Mammary epithelial cell (primary cell): ENCODE measurements at regions of chr4 and their contacts with region 1.

Region 1: GRCh38 chr4:10179957-10180602 is 63.5 kb upstream of the WDR1 start:
- DNase-seq: no peak
- H3K4me3 ChIP-seq: no peak overlapping the region
- H3K27ac ChIP-seq: no peak overlapping the region
- H3K4me1 ChIP-seq: peaks cover 18% of the 10 kb centered on the region
- H3K27me3 ChIP-seq: no peaks in the 10 kb centered on the region
- CTCF ChIP-seq: no peak

Region 2: GRCh38 chr4:10072420-10073017 is 107.6 kb before region 1 on chr4:
- CTCF ChIA-PET with region 1: no interaction called
- dilution Hi-C with region 1: no loop called
- in situ Hi-C with region 1: no loop called
- intact Hi-C with region 1: no loop called
- DNase-seq: no peak
- H3K4me3 ChIP-seq: no peak overlapping the region
- H3K27ac ChIP-seq: no peak overlapping the region
- H3K4me1 ChIP-seq: no peaks in the 10 kb centered on the region
- H3K27me3 ChIP-seq: no peaks in the 10 kb centered on the region
- CTCF ChIP-seq: no peak

Region 3: DNA sequence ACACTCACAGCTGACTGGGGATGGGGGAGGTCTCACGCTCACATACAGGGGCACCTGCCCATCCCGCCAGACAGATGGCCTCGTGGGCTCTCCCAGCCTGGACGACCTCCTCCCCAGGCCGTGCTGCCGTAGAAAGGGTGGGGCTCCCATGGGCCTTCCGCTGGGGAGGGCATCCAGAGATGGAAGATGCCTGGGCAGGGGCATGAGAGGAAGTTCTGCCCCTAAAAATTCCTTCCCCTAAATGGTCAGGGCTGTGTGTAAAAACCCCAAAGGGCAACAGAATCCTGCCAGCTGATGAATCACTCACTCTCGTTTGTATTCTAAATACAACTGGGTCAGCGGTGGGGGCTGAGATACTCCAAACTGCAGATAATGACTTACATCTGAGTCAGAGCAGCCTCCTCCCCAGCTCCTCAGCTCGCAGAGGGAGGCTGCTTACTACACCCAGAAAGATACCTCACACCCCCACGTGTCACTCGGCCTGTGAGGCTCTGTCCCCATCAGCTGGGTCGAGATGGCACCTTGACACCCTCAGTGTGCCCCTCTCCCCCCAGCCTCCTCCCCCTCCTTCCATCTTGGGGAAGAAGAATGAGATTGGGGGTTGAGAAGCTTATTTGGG is 73.5 kb before region 1 on chr4:
- CTCF ChIA-PET with region 1: no interaction called
- dilution Hi-C with region 1: no loop called
- in situ Hi-C with region 1: no loop called
- intact Hi-C with region 1: no loop called
- DNase-seq: peak; percentile 98
- H3K4me3 ChIP-seq: peak overlapping the region in 2 of 3 experiments; percentile 28 to 31
- H3K27ac ChIP-seq: peak overlapping the region; percentile 71
- H3K4me1 ChIP-seq: peaks cover 79% of the 10 kb centered on the region
- H3K27me3 ChIP-seq: no peaks in the 10 kb centered on the region
- CTCF ChIP-seq: no peak

Region 4: DNA sequence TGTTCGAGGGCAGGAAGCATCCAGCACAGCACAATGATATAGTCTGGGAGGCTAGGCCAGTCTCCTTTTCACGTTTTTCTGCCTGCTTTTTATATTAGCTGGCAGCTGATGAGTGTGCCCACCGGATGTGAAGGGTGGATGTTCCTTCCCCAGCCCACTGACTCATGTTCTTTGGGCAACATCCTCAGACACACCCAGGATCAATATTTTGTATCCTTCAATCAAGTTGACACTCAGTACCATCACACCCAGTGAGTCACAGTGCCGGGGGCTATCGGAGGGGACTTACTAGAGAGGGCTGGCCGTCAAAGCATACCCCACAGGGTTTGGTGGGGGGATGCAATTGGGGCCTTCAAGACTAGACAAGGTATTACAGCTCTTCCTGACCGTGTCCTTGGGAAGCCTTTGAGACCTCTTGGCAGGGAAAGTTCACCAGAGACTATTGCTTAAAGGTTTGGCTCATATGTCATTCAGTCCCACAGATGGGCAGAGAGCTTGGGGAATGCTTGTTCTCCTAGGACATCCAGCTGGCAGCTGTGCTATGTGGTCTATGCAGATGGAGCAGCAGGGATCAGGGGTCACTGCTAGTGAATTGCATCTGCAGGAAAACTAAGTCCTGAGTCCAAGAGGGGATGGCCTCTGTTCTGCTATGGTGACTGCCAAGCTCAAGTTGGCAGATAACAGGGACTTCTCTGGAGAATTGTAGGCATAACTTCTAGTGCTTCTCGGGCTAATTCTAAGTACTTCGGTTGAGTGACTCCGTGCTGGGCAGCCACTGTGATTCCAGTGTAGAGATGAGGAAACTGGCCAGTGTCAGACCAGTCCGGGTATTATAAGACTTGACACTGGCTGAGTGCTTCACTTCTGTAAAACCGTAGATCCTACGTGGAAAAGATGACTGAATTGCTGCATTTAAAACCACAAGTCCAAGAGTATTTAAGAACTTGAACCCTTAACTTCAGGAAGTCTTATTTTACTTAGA is 50.6 kb before region 1 on chr4:
- CTCF ChIA-PET with region 1: no interaction called
- dilution Hi-C with region 1: loop called (anchors 5 kb)
- in situ Hi-C with region 1: no loop called
- intact Hi-C with region 1: no loop called
- DNase-seq: no peak
- H3K4me3 ChIP-seq: no peak overlapping the region
- H3K27ac ChIP-seq: no peak overlapping the region
- H3K4me1 ChIP-seq: peaks cover 7% of the 10 kb centered on the region
- H3K27me3 ChIP-seq: no peaks in the 10 kb centered on the region
- CTCF ChIP-seq: no peak

Region 5: DNA sequence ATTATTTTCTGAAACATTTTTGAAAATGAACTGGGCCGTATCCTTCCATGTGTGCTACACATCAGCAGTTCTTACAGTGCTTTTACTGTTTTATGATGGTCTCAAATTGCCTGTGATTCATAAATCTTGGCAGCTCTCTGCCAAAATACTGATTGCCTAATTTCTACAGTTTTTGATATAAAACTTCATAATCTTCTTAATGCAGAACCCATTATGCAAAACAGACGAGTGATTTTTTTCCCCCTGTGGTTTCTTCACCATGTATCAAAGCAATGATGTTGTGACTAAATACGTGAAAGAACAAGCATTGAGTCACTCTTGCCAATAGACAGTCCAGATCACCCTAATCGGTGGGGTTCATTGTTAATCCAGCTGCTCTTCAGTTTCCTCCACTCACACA is 93.0 kb after region 1 on chr4:
- CTCF ChIA-PET with region 1: no interaction called
- dilution Hi-C with region 1: loop called (anchors 5 kb)
- in situ Hi-C with region 1: no loop called
- intact Hi-C with region 1: no loop called
- DNase-seq: peak; percentile 64
- H3K4me3 ChIP-seq: no peak overlapping the region
- H3K27ac ChIP-seq: no peak overlapping the region
- H3K4me1 ChIP-seq: no peaks in the 10 kb centered on the region
- H3K27me3 ChIP-seq: no peaks in the 10 kb centered on the region
- CTCF ChIP-seq: no peak

Region 6: DNA sequence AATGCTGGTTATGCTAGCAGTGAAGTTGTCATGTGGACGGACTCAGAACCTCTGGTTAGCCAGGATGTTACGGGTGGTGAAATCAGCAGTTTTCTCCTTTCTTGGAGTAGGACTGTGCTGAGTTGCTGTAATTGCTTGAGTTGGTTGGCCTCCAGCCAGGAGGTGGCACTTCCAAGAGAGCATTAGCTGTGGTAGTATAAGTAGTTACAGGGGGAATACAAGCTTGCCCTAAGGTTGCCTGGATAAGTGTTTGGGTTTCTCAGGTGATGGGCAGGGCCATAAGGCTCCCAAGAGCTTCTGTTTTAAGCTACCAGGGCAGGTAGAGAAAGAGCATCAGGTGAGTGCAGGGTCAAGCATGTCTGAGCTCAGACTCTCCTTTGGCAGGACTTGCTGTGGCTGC is 174.1 kb after region 1 on chr4:
- CTCF ChIA-PET with region 1: no interaction called
- dilution Hi-C with region 1: no loop called
- in situ Hi-C with region 1: no loop called
- intact Hi-C with region 1: no loop called
- DNase-seq: no peak
- H3K4me3 ChIP-seq: no peak overlapping the region
- H3K27ac ChIP-seq: no peak overlapping the region
- H3K4me1 ChIP-seq: peaks cover 8% of the 10 kb centered on the region
- H3K27me3 ChIP-seq: no peaks in the 10 kb centered on the region
- CTCF ChIP-seq: no peak